BJ (cell line): ENCODE measurements at regions of chr17 and their contacts with region 1.

Region 1: DNA sequence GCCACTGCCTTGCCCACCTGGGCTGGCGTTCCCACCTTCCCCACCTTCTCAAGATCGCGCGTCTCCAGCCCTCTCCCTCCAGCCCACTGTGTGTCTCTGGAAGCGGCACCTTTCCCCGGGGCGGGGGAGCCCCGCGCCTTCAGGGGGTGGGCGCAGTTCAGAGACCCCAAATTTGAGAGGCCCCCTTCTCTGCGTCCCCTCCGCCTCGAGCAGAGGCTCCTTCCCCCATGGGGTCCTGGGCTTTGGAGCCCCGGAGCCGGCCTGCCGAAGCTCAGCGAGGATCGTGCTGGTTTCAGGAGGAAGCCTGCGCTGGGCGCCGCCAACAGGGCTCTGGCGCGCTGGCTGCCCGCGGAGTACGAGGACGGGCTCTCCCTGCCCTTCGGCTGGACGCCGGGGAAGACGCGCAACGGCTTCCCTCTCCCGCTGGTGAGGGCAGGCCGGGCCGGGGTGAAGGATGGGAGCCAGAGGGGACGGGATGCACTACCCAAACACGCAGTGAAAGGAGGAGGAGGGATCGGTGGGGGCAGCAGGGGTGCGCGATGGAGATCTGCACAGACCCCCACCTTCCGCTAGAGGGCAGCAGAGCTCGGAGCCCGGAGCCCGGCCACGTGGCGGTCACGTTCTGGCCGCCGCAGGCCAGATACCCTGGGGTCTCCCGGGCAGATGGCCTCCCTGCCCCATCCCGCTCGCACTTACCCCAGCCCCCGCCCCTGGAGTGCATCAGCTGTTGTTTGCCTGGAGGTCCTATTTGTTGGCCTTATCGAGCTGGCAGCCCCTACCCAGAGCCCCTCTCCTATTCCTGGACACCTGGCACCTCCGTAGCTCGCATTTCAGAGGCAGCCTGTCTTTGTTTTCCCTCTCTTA is 11.1 kb downstream of the LPO start:
- DNase-seq: no peak
- H3K4me3 ChIP-seq: peak overlapping the region; percentile 55
- H3K27me3 ChIP-seq: peaks cover 6% of the 10 kb centered on the region
- CTCF ChIP-seq: peak; percentile 94

Region 2: DNA sequence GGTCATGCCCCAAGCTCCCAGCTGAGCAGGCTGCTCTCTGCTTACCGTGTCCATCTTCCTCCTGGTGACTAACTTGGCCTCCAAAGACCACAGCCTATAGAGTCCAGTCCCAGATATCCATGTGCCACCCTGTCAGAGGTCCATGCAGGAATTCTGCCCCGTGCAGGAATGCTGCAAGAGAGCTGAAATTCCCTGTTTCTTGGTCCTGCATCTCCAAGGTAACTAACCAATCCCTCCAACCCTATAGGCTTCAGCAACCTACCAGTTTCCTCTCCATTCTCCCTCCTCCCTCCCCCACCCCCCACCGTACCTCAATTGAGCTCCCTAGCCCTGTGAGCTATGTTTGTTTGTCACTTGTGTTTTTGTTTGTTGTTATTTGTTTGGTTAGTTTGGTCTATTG is 20.8 kb before region 1 on chr17:
- CTCF ChIA-PET with region 1: interaction called, 10 read pairs
- POLR2A ChIA-PET with region 1: no interaction called
- DNase-seq: no peak
- H3K4me3 ChIP-seq: no peak overlapping the region
- H3K27me3 ChIP-seq: no peaks in the 10 kb centered on the region
- CTCF ChIP-seq: no peak

Region 3: GRCh38 chr17:58238139-58238634 is 11.3 kb before region 1 on chr17 and contains the start of gene LPO:
- CTCF ChIA-PET with region 1: interaction called, 50 read pairs
- POLR2A ChIA-PET with region 1: no interaction called
- DNase-seq: no peak
- H3K4me3 ChIP-seq: no peak within 1 kb of the TSS
- H3K27me3 ChIP-seq: peaks cover 21% of the 10 kb centered on the region
- CTCF ChIP-seq: no peak
- polyA plus RNA-seq, gene LPO: 0.06 and 0.07 TPM in 2 replicates